ENCODE measurements at regions of chr4 and their contacts with region 1.

Region 1: DNA sequence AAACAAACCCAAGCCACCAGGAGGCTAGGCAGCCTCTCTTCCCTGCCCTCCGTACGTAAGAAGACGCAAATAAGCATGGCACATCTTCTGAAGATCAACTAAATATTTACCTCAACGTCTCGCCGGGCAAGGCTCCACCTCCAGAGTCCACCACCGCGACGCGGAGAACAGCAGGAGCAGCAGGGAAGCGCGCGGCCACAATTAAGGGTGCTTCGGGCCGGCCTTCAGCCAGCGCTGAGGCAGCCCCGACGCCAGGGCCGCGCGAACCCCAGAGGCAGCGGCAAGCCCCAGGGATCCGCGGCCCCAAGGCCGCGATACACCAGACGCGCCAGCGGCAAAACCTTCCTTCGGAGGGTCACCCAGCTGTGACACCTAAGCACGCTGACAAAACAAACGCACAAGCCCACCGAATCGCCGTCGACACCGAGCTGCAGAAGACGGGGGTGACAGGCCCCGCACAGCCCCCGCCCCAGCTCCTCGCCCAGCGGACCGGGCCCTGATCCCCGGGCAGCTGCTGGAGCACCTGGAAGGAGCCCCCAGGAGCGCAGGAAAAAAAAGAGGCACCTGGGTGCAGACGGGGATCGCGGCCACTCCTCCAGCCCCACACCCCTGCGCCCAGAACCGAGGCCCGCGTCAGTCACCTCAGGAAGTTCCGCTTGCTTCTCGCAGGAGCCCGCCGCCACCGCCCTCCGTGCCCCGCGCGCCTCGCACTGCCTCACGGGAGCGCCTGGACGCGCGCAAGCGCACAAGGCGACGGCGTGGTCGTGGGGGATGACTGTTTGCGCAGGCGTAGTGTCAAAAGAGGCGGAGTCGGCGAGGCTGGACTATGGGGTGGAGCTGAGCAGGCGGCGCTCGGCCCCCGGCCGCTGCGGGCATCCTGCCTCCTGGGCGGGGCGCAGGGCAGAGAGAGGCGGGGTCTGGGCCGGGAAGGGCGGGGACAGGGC is at the starts of genes HAUS3 and POLN:
- H3K4me3 Mint-ChIP-seq: peak within 1 kb of the TSS; percentile 89
- H3K27ac Mint-ChIP-seq: peak within 1 kb of the TSS; percentile 87
- H3K4me1 Mint-ChIP-seq: peaks cover 73% of the 10 kb centered on the region
- H3K27me3 Mint-ChIP-seq: no peaks in the 10 kb centered on the region

Region 2: GRCh38 chr4:1870578-1871443 is 370.9 kb before region 1 on chr4 and contains the start of gene NSD2:
- intact Hi-C with region 1: loop called (anchors 5 kb)
- H3K4me3 Mint-ChIP-seq: peak within 1 kb of the TSS; percentile 78
- H3K27ac Mint-ChIP-seq: peak within 1 kb of the TSS; percentile 88
- H3K4me1 Mint-ChIP-seq: peaks cover 29% of the 10 kb centered on the region
- H3K27me3 Mint-ChIP-seq: peaks cover 21% of the 10 kb centered on the region

Region 3: DNA sequence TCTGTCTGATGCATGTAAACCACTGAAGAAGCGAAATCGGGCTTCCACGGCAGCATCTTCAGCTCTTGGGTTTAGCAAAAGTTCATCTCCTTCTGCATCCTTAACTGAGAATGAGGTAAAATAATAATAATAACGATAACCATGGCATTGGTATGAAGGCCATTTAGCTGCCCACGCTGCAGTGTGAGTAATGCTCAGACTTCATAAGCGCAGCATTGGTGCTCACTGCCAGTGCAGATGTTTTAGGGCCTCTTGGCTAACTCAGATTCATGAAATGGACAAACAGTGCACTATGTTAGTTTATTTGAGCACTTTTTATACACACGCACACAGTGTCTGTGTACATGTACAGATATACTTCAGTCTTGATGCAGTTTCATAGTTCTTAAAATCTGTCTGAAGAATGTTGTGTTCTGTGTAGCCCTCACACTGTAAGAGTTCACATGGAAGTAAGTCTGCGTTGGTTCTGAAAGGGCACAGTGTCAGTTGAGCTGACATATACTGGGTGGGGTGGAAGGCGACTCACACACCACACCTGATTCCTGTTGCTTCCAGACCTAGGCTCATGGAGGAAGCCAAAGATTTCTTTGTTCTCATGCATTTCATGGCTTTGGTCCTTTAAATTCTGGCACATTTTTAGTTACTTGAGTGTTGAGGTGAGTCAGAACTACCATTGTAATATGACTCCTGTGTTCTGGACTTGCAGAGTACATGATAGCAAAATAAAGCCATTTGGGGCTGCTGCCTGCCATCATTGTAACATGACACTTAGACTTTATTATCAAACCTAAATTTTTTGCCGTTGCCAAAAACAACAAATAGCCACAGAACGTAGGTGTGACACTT is 301.8 kb before region 1 on chr4:
- intact Hi-C with region 1: no loop called
- H3K4me3 Mint-ChIP-seq: no peak overlapping the region
- H3K27ac Mint-ChIP-seq: no peak overlapping the region
- H3K4me1 Mint-ChIP-seq: no peaks in the 10 kb centered on the region
- H3K27me3 Mint-ChIP-seq: no peaks in the 10 kb centered on the region

Region 4: GRCh38 chr4:2262143-2262943 is 20.7 kb after region 1 on chr4:
- intact Hi-C with region 1: loop called (anchors 1 kb)
- H3K4me3 Mint-ChIP-seq: peak overlapping the region; percentile 78
- H3K27ac Mint-ChIP-seq: peak overlapping the region; percentile 83
- H3K4me1 Mint-ChIP-seq: peaks cover 28% of the 10 kb centered on the region
- H3K27me3 Mint-ChIP-seq: no peaks in the 10 kb centered on the region

Region 5: DNA sequence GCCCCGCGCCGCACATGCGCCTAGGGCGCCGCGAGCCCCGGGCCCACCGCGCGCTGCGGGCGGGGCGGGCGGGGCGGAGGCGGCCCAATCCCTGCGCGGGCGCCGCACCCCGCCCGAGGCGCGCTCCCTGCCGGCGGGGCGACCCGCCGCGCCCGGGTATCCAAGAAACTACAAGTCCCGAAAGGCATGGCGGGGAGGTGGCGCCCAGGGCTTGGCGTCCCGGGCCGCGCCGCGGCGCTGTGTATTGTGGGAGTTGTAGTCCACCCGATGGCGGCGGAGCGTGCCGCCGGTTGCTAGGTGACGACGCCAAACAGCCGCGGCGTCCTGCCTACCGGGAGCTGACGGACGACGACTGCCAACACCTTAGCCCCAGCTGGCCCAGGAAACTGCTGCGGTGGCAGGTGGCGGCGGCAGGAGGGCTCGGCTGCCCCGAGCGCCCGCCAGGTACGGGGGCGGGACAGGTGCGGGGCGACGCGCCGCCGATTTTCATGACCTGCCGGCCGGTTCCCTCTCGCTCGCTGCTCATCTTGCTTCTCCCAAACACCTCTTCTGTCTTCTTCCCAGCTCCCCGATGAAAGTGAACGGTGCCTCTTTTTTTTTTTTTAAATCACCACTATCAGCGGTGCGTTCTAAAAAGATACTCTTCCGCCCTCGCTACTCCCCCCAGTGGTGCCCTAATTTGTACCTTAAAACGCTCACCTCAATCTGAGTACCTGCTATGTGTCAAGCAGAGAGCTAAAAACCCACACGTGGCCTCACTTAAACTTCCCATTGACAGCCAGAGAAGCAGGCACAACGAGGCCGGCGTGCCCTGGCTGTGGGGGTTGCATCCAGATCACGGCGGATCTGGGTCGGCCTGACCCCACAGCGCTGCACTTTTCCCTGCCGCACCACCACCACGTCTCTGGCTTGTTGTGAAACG is 177.2 kb after region 1 on chr4 and contains the start of gene CFAP99:
- intact Hi-C with region 1: loop called (anchors 2 kb)
- H3K4me3 Mint-ChIP-seq: peak within 1 kb of the TSS; percentile 89
- H3K27ac Mint-ChIP-seq: peak within 1 kb of the TSS; percentile 87
- H3K4me1 Mint-ChIP-seq: peaks cover 50% of the 10 kb centered on the region
- H3K27me3 Mint-ChIP-seq: peaks cover 50% of the 10 kb centered on the region

Region 6: DNA sequence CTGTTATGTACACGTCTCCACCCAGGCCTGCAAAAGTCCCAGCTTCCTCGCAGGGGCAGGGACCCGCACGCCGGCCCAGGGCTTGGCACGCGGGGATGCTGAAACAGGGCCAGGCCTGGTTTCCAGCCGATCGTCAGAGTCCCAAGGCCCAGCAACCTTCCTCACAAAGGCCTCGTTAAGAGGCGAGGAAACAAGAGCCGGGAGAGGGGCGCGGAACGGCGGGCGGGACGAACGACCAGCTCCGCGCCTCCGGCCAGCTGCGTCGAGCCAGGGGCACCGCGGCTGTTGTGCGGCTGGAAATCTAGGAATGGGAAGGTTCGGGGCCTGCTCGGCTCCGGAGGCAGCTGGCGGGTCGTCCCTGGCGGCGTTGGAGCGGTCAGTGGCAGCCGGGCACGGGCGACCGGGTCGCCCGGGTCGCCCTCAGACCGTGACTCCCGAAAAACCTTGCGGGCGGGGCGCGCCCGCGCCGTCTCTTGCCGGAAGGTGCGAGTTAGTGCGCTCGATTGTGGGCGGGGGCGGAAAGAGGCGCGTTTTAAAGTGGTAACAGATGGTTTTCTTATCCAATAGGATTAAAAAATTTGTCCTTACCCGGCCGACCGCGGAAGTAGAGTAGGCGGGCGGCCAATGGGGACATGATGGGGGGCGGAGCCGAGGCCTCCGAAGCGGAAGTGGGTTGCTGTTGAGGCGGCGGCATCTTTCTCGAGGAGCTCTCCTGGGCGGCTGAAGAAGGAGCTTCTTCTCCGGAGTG is 226.9 kb after region 1 on chr4 and contains the start of gene RNF4:
- intact Hi-C with region 1: loop called (anchors 5 kb)
- H3K4me3 Mint-ChIP-seq: peak within 1 kb of the TSS; percentile 97
- H3K27ac Mint-ChIP-seq: peak within 1 kb of the TSS; percentile 97
- H3K4me1 Mint-ChIP-seq: peaks cover 47% of the 10 kb centered on the region
- H3K27me3 Mint-ChIP-seq: peaks cover 8% of the 10 kb centered on the region

Region 7: GRCh38 chr4:2536193-2537010 is 294.7 kb after region 1 on chr4 and contains the start of gene FAM193A:
- intact Hi-C with region 1: loop called (anchors 2 kb)
- H3K4me3 Mint-ChIP-seq: peak within 1 kb of the TSS; percentile 91
- H3K27ac Mint-ChIP-seq: peak within 1 kb of the TSS; percentile 93
- H3K4me1 Mint-ChIP-seq: peaks cover 24% of the 10 kb centered on the region
- H3K27me3 Mint-ChIP-seq: no peaks in the 10 kb centered on the region

Measured in dendritic cell treated with granulocyte-macrophage colony-stimulating factor and Interleukin-4, amounts not matched to agents 40 ng/mL and 50 ng/mL, for 4 days (primary cell).